CD4-positive, alpha-beta T cell (primary cell): ENCODE measurements at regions of chr4 and their contacts with region 1.

Region 1: GRCh38 chr4:113636438-113636818 is 125.1 kb downstream of the CAMK2D start:
- DNase-seq: peak in 6 of 14 experiments; percentile 11 to 75 (median 43)
- ATAC-seq: peak; percentile 76
- H3K4me3 ChIP-seq: no peak overlapping the region
- H3K4me3 Mint-ChIP-seq: peak overlapping the region; percentile 39
- H3K27ac ChIP-seq: peak overlapping the region in 1 of 2 donors; percentile 33
- H3K27ac Mint-ChIP-seq: peak overlapping the region; percentile 80
- H3K4me1 ChIP-seq: peaks cover 22% of the 10 kb centered on the region
- H3K4me1 Mint-ChIP-seq: peaks cover 55% of the 10 kb centered on the region
- H3K27me3 ChIP-seq: no peaks in the 10 kb centered on the region
- H3K27me3 Mint-ChIP-seq: no peaks in the 10 kb centered on the region
- CTCF ChIP-seq: peak; percentile 28

Region 2: GRCh38 chr4:113445286-113445685 is 191.1 kb before region 1 on chr4:
- CTCF ChIA-PET with region 1: no interaction called
- POLR2A ChIA-PET with region 1: no interaction called
- intact Hi-C with region 1: no loop called
- DNase-seq: no peak
- ATAC-seq: no peak
- H3K4me3 ChIP-seq: no peak overlapping the region
- H3K4me3 Mint-ChIP-seq: no peak overlapping the region
- H3K27ac ChIP-seq: no peak overlapping the region
- H3K27ac Mint-ChIP-seq: no peak overlapping the region
- H3K4me1 ChIP-seq: no peaks in the 10 kb centered on the region
- H3K4me1 Mint-ChIP-seq: no peaks in the 10 kb centered on the region
- H3K27me3 ChIP-seq: no peaks in the 10 kb centered on the region
- H3K27me3 Mint-ChIP-seq: no peaks in the 10 kb centered on the region
- CTCF ChIP-seq: no peak

Region 3: GRCh38 chr4:113513382-113513781 is 123.0 kb before region 1 on chr4:
- CTCF ChIA-PET with region 1: no interaction called
- POLR2A ChIA-PET with region 1: no interaction called
- intact Hi-C with region 1: no loop called
- DNase-seq: no peak
- ATAC-seq: no peak
- H3K4me3 ChIP-seq: no peak overlapping the region
- H3K4me3 Mint-ChIP-seq: no peak overlapping the region
- H3K27ac ChIP-seq: no peak overlapping the region
- H3K27ac Mint-ChIP-seq: no peak overlapping the region
- H3K4me1 ChIP-seq: no peaks in the 10 kb centered on the region
- H3K4me1 Mint-ChIP-seq: no peaks in the 10 kb centered on the region
- H3K27me3 ChIP-seq: no peaks in the 10 kb centered on the region
- H3K27me3 Mint-ChIP-seq: no peaks in the 10 kb centered on the region
- CTCF ChIP-seq: no peak

Region 4: DNA sequence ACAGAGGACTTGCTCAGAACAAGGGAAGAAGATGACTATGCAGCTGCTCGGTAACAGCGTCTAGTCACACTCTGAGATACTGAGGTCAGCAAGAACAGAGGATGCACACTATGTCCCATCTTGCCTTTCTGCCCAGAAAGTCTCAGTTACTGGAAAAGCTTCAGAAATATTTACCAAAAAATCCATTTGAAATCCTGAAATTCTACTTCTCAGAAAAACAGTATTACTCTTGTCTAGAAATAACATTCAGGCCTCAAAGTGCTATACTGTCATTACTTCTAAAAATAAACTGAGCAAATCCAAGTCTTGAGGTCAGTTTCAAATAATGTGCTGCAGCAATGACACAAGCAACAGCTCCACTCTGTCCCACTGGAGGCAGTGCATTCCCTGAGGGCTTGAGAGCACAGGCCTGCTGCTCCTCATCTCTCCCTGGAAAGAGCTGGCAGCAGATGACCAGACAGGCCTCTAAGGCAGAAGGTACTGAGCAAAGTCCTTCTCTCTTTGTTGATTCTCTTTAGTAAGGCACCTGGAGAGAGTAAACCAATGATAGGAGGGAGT is 48.2 kb after region 1 on chr4:
- CTCF ChIA-PET with region 1: no interaction called
- POLR2A ChIA-PET with region 1: interaction called, 7 read pairs
- intact Hi-C with region 1: loop called in 1 of 2 experiments (anchors 5 kb)
- DNase-seq: peak in 2 of 14 experiments; percentile 17 to 32
- ATAC-seq: no peak
- H3K4me3 ChIP-seq: no peak overlapping the region
- H3K4me3 Mint-ChIP-seq: peak overlapping the region; percentile 23
- H3K27ac ChIP-seq: peak overlapping the region; percentile 10
- H3K27ac Mint-ChIP-seq: peak overlapping the region; percentile 87
- H3K4me1 ChIP-seq: peaks cover 14% of the 10 kb centered on the region
- H3K4me1 Mint-ChIP-seq: peaks cover 53% of the 10 kb centered on the region
- H3K27me3 ChIP-seq: no peaks in the 10 kb centered on the region
- H3K27me3 Mint-ChIP-seq: no peaks in the 10 kb centered on the region
- CTCF ChIP-seq: no peak

Region 5: GRCh38 chr4:113901994-113902787 is 265.8 kb after region 1 on chr4:
- CTCF ChIA-PET with region 1: no interaction called
- POLR2A ChIA-PET with region 1: interaction called, 6 read pairs
- intact Hi-C with region 1: loop called (anchors 5 to 10 kb)
- DNase-seq: peak; percentile 55 to 91 (median 65)
- ATAC-seq: peak; percentile 78
- H3K4me3 ChIP-seq: peak overlapping the region; percentile 19
- H3K4me3 Mint-ChIP-seq: peak overlapping the region; percentile 26
- H3K27ac ChIP-seq: peak overlapping the region; percentile 68 to 70
- H3K27ac Mint-ChIP-seq: peak overlapping the region; percentile 85
- H3K4me1 ChIP-seq: peaks cover 42% of the 10 kb centered on the region
- H3K4me1 Mint-ChIP-seq: peaks cover 83% of the 10 kb centered on the region
- H3K27me3 ChIP-seq: no peaks in the 10 kb centered on the region
- H3K27me3 Mint-ChIP-seq: no peaks in the 10 kb centered on the region
- CTCF ChIP-seq: peak; percentile 71